Left cardiac atrium (tissue), 4 donors: ENCODE measurements at regions of chr1 and their contacts with region 1.

Region 1: DNA sequence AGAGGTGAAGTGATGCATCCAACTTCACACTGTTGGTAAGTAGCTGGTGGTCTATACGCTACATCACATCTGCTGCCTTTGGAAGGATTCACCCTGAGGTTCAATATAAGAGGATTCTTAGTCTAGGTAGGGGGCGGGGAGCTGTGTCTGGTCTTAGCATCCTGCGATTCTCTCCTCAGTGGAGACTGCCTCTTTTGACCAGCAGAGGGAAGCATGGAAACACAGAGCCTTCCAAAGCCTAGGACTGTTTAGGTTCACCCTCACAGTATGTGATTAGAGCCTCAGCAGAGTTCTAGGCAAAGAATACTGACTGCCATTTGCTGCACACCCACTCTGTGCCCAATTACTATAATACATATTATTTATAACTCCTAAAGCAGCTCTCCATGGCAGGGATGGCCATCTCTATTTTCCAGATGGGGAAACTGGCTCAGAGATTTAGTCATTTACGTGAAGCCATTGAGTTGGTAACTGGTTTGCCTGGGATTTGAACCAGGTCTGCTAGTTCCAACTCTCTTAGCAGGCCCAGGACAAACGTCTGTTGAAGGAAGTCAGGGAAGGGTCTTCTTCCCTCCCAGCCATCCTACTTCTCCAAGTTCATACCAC is 28.9 kb upstream of the EFCAB14 start:
- DNase-seq: peak; percentile 31
- ATAC-seq: peak; percentile 78 to 93

Region 2: DNA sequence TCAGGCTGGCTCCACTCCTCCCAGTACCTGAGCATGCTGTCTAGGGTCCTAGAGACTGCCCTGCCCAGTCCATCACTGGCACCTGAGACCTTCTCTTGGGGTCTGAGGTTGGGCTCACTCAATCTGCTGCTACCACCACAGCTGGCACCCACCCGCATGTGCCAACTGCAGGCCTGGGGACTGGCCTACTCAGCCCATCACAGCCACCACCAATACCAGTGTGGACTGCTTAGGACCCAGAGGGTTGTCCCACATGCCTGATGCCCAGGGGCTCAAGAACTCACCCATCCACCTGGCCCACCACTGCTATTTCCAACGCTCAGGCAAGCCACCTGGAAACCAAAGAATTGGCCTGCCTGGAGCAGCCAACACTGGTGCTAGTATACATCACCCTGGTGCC is 114.6 kb after region 1 on chr1:
- intact Hi-C with region 1: no loop called
- DNase-seq: no peak
- ATAC-seq: no peak

Region 3: GRCh38 chr1:46991083-46991923 is 243.5 kb after region 1 on chr1:
- intact Hi-C with region 1: loop called (anchors 5 to 10 kb)
- DNase-seq: no peak
- ATAC-seq: no peak

Region 4: DNA sequence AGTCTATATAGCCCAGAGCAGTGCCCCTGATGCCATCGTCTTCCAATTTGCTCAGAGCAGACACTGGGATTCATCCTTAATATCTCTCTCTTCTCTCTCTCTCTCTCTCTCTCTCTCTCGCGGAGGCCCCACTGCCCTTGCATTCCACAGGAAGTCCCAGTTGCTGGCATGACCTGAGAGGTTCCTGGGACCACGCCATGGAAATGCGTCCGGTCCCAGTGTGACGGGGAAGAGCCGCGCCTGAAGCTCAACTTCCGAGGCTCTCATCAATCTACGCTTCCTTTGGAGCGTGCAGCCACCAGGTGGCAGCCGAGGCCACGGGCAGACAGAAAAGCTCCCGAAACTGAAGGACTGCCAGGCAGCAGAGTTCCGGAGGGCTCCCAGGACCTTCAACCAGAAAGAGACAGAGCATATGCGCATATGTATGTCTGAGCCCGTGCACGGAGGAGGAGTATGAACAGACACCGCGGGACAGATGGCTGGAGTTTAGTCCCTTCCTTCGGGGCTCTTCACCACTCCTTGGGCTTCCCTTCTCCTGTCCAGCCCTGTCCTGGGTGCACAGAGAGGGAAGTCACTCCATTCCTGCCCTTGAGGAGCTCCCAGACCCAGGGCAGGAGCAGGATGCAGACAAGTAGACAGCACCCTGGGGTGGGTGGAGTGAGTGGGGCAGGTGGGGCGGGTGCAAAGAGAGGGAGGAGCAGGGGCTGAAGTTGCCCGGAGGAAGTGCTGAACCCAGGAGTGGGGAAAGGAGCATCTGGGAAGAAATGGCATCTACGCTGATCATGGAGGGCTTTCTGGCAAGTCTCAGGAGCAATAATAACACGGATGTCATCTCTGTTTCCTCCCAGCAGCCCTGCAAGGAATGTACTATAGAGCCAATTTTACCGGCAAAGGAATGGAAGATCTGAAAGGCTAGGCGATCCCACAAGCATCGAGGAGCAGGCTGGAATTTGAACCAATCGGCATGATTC is 431.5 kb after region 1 on chr1:
- intact Hi-C with region 1: loop called in 1 of 2 experiments (anchors 5 kb)
- DNase-seq: peak; percentile 93
- ATAC-seq: peak; percentile 81 to 93